Activated naive CD4-positive, alpha-beta T cell treated with anti-CD3 and anti-CD28 coated beads for 36 hours (primary cell): ENCODE measurements at regions of chr9 and their contacts with region 1.

Region 1: DNA sequence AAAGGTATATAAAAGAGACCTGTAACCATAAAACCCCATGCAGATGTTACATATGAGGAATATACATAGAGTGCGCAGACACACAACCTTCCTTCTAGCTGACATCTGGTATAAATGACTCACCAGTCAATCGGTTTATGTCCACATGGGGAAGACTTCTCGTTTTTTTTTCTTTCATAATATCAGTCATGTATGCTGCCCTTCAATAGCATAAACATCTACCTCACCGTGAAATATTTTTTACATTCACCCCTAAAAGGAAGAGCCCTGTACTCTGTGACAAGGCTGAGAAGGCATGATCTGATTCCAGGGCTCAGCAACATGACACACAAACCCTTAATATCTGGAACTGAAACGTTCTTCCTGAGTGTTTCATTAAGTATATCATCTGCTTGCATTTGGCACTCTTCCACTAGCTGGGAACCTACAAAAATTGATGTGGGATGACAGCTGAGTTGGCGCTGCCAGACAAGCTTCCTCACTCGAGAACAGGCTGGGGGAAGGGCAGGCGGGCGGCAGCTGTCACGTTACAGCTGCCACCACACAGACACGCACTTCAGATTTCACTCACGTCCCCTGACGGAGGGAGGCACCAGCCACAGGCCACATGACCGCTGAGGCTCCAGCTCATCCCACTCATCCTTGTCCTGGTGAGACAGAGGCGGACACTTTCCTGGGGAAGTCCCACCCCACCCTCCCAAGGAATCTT is 74.2 kb downstream of the SHB start:
- DNase-seq: peak; percentile 57
- H3K4me3 Mint-ChIP-seq: no peak overlapping the region
- H3K27ac Mint-ChIP-seq: no peak overlapping the region
- H3K4me1 Mint-ChIP-seq: peaks cover 13% of the 10 kb centered on the region
- H3K27me3 Mint-ChIP-seq: peaks cover 6% of the 10 kb centered on the region

Region 2: GRCh38 chr9:37953775-37954437 is 40.9 kb before region 1 on chr9:
- CTCF ChIA-PET with region 1: no interaction called
- intact Hi-C with region 1: loop called (anchors 1 kb)
- DNase-seq: peak; percentile 66
- H3K4me3 Mint-ChIP-seq: no peak overlapping the region
- H3K27ac Mint-ChIP-seq: peak overlapping the region; percentile 69
- H3K4me1 Mint-ChIP-seq: peaks cover 21% of the 10 kb centered on the region
- H3K27me3 Mint-ChIP-seq: no peaks in the 10 kb centered on the region

Region 3: GRCh38 chr9:38160613-38161215 is 165.9 kb after region 1 on chr9:
- CTCF ChIA-PET with region 1: no interaction called
- intact Hi-C with region 1: loop called (anchors 10 kb)
- DNase-seq: peak; percentile 79
- H3K4me3 Mint-ChIP-seq: no peak overlapping the region
- H3K27ac Mint-ChIP-seq: no peak overlapping the region
- H3K4me1 Mint-ChIP-seq: no peaks in the 10 kb centered on the region
- H3K27me3 Mint-ChIP-seq: no peaks in the 10 kb centered on the region